ENCODE measurements at regions of chr15 and their contacts with region 1.

Region 1: GRCh38 chr15:41116116-41116871 is at the start of gene INO80:
- DNase-seq: peak; percentile 92 to 98
- ATAC-seq: peak; percentile 83 to 93 (median 84)
- H3K4me3 ChIP-seq: peak within 1 kb of the TSS; percentile 96
- H3K4me3 Mint-ChIP-seq: peak within 1 kb of the TSS; percentile 96
- H3K27ac ChIP-seq: peak within 1 kb of the TSS; percentile 82
- H3K27ac Mint-ChIP-seq: peak within 1 kb of the TSS; percentile 98 to 99
- H3K4me1 ChIP-seq: peaks cover 11% of the 10 kb centered on the region
- H3K4me1 Mint-ChIP-seq: peaks cover 19 to 24% of the 10 kb centered on the region in 2 donors
- H3K27me3 ChIP-seq: no peaks in the 10 kb centered on the region
- H3K27me3 Mint-ChIP-seq: no peaks in the 10 kb centered on the region
- CTCF ChIP-seq: no peak
- total RNA-seq, gene INO80: 36.4 to 45.7 (median 43.9) TPM

Region 2: DNA sequence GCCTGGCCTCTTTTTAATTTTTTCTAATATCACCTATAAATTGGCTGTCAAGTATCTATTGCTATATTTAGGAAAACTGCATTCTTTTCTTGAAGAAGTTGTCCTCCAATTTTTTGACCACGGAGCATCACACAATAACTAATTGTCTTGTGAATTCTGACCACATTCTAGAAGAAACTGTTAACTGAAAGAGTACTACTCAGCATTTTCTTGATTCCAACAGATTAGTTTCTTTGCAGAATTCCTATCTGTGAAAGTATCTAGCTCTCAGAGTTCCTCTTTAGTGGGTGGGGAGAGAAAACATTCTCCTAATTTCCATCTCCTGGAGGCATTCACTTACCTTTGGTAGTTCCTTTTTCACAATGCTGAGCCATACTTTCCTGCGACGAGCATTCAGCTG is 31.3 kb before region 1 on chr15:
- intact Hi-C with region 1: no loop called
- DNase-seq: no peak
- ATAC-seq: no peak
- H3K4me3 ChIP-seq: no peak overlapping the region
- H3K4me3 Mint-ChIP-seq: no peak overlapping the region
- H3K27ac ChIP-seq: no peak overlapping the region
- H3K27ac Mint-ChIP-seq: no peak overlapping the region
- H3K4me1 ChIP-seq: peaks cover 4% of the 10 kb centered on the region
- H3K4me1 Mint-ChIP-seq: peaks cover 12 to 16% of the 10 kb centered on the region in 2 donors
- H3K27me3 ChIP-seq: no peaks in the 10 kb centered on the region
- H3K27me3 Mint-ChIP-seq: no peaks in the 10 kb centered on the region
- CTCF ChIP-seq: no peak

Region 3: GRCh38 chr15:41139619-41140018 is 23.3 kb after region 1 on chr15:
- intact Hi-C with region 1: no loop called
- DNase-seq: no peak
- ATAC-seq: no peak
- H3K4me3 ChIP-seq: no peak overlapping the region
- H3K4me3 Mint-ChIP-seq: no peak overlapping the region
- H3K27ac ChIP-seq: no peak overlapping the region
- H3K27ac Mint-ChIP-seq: no peak overlapping the region
- H3K4me1 ChIP-seq: no peaks in the 10 kb centered on the region
- H3K4me1 Mint-ChIP-seq: no peaks in the 10 kb centered on the region
- H3K27me3 ChIP-seq: no peaks in the 10 kb centered on the region
- H3K27me3 Mint-ChIP-seq: no peaks in the 10 kb centered on the region
- CTCF ChIP-seq: no peak

Region 4: GRCh38 chr15:41230650-41231533 is 114.6 kb after region 1 on chr15 and contains the starts of genes CHP1 and EXD1:
- intact Hi-C with region 1: loop called (anchors 2 kb)
- DNase-seq: peak; percentile 95 to 96
- ATAC-seq: peak; percentile 95 to 97 (median 96)
- H3K4me3 ChIP-seq: peak within 1 kb of the TSS; percentile 89
- H3K4me3 Mint-ChIP-seq: peak within 1 kb of the TSS; percentile 79
- H3K27ac ChIP-seq: peak within 1 kb of the TSS; percentile 88
- H3K27ac Mint-ChIP-seq: peak within 1 kb of the TSS; percentile 87 to 97
- H3K4me1 ChIP-seq: peaks cover 19% of the 10 kb centered on the region
- H3K4me1 Mint-ChIP-seq: peaks cover 35 to 37% of the 10 kb centered on the region in 2 donors
- H3K27me3 ChIP-seq: no peaks in the 10 kb centered on the region
- H3K27me3 Mint-ChIP-seq: no peaks in the 10 kb centered on the region
- CTCF ChIP-seq: peak; percentile 97
- total RNA-seq, gene CHP1: 50.7 to 55.9 (median 51.3) TPM
- total RNA-seq, gene EXD1: not detected

Region 5: GRCh38 chr15:41331833-41332787 is 215.8 kb after region 1 on chr15 and contains the start of gene OIP5:
- intact Hi-C with region 1: loop called (anchors 2 kb)
- DNase-seq: peak; percentile 93 to 99
- ATAC-seq: peak; percentile 95 to 99 (median 96)
- H3K4me3 ChIP-seq: peak within 1 kb of the TSS; percentile 75
- H3K4me3 Mint-ChIP-seq: peak within 1 kb of the TSS; percentile 98
- H3K27ac ChIP-seq: peak within 1 kb of the TSS; percentile 46
- H3K27ac Mint-ChIP-seq: peak within 1 kb of the TSS; percentile 90 to 99
- H3K4me1 ChIP-seq: peaks cover 12% of the 10 kb centered on the region
- H3K4me1 Mint-ChIP-seq: peaks cover 26 to 27% of the 10 kb centered on the region in 2 donors
- H3K27me3 ChIP-seq: no peaks in the 10 kb centered on the region
- H3K27me3 Mint-ChIP-seq: no peaks in the 10 kb centered on the region
- CTCF ChIP-seq: peak; percentile 41
- total RNA-seq, gene OIP5: 0.29 to 0.64 TPM in 2 of 3 donors, not detected in the other

Measured in natural killer cell (primary cell).